ENCODE measurements at regions of chr4 and their contacts with region 1.

Region 1: DNA sequence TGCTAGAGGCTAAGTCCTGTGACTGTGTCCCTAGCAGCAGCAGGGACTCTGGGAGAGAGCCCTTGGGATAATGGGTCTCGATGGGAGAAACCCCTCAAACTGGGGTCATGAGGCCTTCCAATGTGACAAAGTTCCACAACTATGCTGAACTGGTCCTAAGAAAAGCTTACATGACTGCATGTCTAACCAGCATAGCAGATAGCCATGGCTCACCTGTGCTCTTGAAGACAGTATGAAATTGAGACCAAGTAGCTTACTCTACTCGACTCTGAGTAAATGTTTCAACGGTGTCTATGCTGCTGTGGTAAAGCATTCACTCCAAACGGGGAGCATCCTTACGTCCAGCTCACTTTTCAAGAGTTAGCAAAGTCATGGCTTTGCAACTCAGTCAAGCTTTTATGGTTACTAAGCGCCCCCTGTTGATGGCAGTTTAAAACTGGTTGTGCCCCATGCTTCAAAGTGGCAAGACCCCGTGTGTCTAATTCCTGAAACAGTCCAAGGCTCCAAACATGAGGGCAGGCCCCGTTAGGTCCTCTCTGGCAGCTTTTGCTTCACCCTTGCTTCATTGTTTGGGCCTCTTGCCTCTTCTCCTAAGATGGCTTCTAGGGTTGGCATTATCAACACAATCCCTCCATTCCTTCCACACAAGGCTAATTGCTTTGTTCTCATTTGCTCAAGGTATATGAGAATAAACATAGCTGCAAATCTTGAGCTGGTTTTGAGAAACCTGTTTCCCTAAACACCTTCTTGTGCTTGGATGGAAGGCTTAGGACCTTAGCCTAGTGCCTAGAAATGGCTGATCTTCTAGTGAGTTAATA is 46.6 kb downstream of the CCNG2 start:
- DNase-seq: peak; percentile 46 to 66 (median 48)
- H3K4me3 ChIP-seq: no peak overlapping the region
- H3K27ac ChIP-seq: no peak overlapping the region
- H3K4me1 ChIP-seq: no peaks in the 10 kb centered on the region
- H3K27me3 ChIP-seq: no peaks in the 10 kb centered on the region
- CTCF ChIP-seq: peak; percentile 28 to 69 (median 57)
- EP300 ChIP-seq: no peak
- POLR2A ChIP-seq: no peak

Region 2: DNA sequence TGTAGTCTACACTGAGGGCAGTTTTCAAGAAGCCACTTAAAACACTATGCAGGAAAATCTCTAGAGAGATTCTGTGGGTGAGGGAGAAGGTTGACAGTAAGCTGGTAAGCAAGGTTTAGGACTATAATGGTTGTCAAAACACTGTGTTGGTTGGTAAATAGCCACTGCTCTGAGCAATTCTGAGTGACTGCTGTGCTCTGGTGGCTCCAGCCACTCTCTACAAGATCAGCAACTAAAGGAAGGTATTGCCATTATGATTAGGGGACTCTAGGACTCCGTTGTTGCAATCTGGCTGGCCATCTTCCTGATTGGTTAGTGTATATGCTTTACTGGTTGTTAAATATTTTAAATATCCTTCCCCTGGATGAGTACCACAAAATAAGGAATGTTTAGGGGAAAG is 957.6 kb before region 1 on chr4:
- intact Hi-C with region 1: loop called in 1 of 4 experiments (anchors 5 kb)
- DNase-seq: no peak
- H3K4me3 ChIP-seq: no peak overlapping the region
- H3K27ac ChIP-seq: no peak overlapping the region
- H3K4me1 ChIP-seq: no peaks in the 10 kb centered on the region
- H3K27me3 ChIP-seq: no peaks in the 10 kb centered on the region
- CTCF ChIP-seq: no peak
- EP300 ChIP-seq: no peak
- POLR2A ChIP-seq: no peak

Region 3: DNA sequence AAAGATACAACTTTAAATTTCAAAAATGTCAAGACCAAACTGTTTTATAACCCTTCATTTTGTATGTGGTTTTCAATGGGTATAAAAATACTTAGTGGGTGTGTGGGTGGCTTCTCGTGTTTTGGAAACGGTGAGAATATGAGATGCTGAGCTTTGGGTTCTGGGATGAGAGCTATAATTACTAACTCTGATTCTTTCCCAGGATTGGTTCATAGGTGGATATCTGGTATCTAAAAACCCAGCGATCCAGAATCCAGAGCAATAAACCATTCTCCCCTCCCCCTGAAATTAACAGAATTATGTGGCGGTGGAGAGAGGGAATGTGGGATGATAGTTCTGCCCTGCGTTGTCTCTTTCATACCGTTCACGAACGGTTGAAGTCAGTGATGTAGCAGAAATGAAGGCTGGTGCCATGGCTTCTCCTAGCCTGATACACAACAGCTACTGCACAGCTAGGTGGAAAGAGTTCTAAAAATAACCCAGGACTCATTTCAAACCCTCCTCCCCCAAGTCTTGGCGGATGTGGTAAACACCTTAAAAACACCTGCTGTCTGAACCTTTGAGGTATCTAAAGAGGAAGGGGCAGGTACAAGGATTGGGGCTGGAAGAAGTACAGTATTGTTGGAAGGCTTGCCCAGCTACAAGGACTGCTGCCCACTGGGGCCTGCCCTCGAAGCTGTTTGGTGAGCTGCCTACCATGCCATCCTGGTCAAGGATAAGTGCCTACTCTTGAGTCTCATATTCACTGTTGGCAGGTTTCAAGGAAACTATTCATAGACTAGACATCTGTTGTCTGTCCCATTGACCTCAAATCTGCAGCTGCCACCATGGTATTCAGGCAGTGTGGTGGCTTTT is 209.6 kb before region 1 on chr4:
- intact Hi-C with region 1: no loop called
- DNase-seq: no peak
- H3K4me3 ChIP-seq: no peak overlapping the region
- H3K27ac ChIP-seq: no peak overlapping the region
- H3K4me1 ChIP-seq: peaks cover 2% of the 10 kb centered on the region
- H3K27me3 ChIP-seq: no peaks in the 10 kb centered on the region
- CTCF ChIP-seq: no peak
- EP300 ChIP-seq: no peak
- POLR2A ChIP-seq: no peak

Region 4: GRCh38 chr4:77095101-77095821 is 108.3 kb before region 1 on chr4:
- intact Hi-C with region 1: loop called in 1 of 4 experiments (anchors 5 kb)
- DNase-seq: peak; percentile 20 to 61 (median 47)
- H3K4me3 ChIP-seq: no peak overlapping the region
- H3K27ac ChIP-seq: no peak overlapping the region
- H3K4me1 ChIP-seq: no peaks in the 10 kb centered on the region
- H3K27me3 ChIP-seq: no peaks in the 10 kb centered on the region
- CTCF ChIP-seq: peak in 2 of 3 donors; percentile 19 to 37
- EP300 ChIP-seq: no peak
- POLR2A ChIP-seq: no peak

Measured in ovary (tissue), 10 donors.